Caco-2 (cell line): ENCODE measurements at regions of chr11 and their contacts with region 1.

Region 1: GRCh38 chr11:4551346-4551979 is 6.5 kb downstream of the OR52M1 start:
- DNase-seq: no peak
- H3K4me3 ChIP-seq: no peak overlapping the region
- H3K4me3 Mint-ChIP-seq: no peak overlapping the region
- H3K27ac Mint-ChIP-seq: no peak overlapping the region
- H3K4me1 ChIP-seq: peaks cover 15% of the 10 kb centered on the region
- H3K4me1 Mint-ChIP-seq: no peaks in the 10 kb centered on the region
- H3K27me3 ChIP-seq: no peaks in the 10 kb centered on the region
- H3K27me3 Mint-ChIP-seq: no peaks in the 10 kb centered on the region
- CTCF ChIP-seq: peak; percentile 25 to 36

Region 2: GRCh38 chr11:4607781-4608666 is 56.6 kb after region 1 on chr11 and contains the start of gene TRIM68:
- CTCF ChIA-PET with region 1: no interaction called
- POLR2A ChIA-PET with region 1: no interaction called
- intact Hi-C with region 1: loop called (anchors 5 kb)
- DNase-seq: peak; percentile 97 to 98
- H3K4me3 ChIP-seq: peak within 1 kb of the TSS; percentile 50
- H3K4me3 Mint-ChIP-seq: peak within 1 kb of the TSS; percentile 87
- H3K27ac Mint-ChIP-seq: peak within 1 kb of the TSS; percentile 88
- H3K4me1 ChIP-seq: 0 out of 2 replicates have a peak, but pooled peaks cover 13% of the 10 kb centered on the region
- H3K4me1 Mint-ChIP-seq: peaks cover 10% of the 10 kb centered on the region
- H3K27me3 ChIP-seq: no peaks in the 10 kb centered on the region
- H3K27me3 Mint-ChIP-seq: no peaks in the 10 kb centered on the region
- CTCF ChIP-seq: no peak
- total RNA-seq, gene TRIM68: 4.9 and 6.9 TPM in 2 replicates